ENCODE measurements at regions of chr9 and their contacts with region 1.

Region 1: GRCh38 chr9:133144137-133144903 is 19.4 kb downstream of the GBGT1 start:
- DNase-seq: peak; percentile 96
- H3K4me3 Mint-ChIP-seq: peak overlapping the region; percentile 57
- H3K27ac Mint-ChIP-seq: peak overlapping the region; percentile 65
- H3K4me1 Mint-ChIP-seq: peaks cover 59% of the 10 kb centered on the region
- H3K27me3 Mint-ChIP-seq: no peaks in the 10 kb centered on the region

Region 2: GRCh38 chr9:132901856-132902831 is 242.2 kb before region 1 on chr9:
- CTCF ChIA-PET with region 1: no interaction called
- intact Hi-C with region 1: no loop called
- DNase-seq: peak; percentile 92
- H3K4me3 Mint-ChIP-seq: no peak overlapping the region
- H3K27ac Mint-ChIP-seq: no peak overlapping the region
- H3K4me1 Mint-ChIP-seq: peaks cover 2% of the 10 kb centered on the region
- H3K27me3 Mint-ChIP-seq: no peaks in the 10 kb centered on the region

Region 3: DNA sequence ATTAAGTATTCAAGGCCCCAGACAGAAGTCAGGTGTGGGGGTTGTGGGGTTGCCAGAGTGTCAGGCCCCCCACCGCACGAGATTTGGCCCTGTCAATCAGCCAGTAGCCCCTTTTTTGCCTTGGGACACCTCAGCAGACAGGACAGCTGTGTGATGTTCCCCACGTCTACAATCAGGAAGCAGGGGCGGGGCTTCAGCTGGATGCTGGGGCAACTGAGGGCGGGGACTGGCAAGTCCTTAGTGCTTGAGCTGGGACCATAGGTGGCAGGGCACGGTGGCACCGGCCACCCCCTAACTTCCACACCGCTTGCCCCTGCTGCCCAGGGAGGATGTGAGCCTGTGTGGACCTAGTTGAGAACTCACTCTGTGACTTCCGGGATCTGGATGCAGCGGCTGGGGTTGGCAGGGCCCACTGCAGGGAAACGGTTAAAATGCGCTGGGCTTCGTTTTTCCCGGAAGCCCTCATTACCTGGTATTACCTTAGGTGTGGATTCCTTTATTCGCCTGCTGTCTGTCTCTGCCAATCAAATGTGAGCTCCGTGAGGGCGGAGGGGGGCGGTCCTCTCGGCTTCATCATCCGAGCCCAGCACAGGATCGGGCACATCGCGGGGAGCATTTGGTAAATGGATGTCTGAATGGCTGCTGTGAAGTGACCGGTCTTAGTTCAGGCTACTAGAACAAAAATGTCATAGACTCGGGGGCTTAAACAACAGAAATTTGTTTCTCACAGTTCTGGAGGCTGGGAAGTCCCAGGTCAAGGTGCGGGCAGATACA is 121.0 kb before region 1 on chr9:
- CTCF ChIA-PET with region 1: interaction called, 10 read pairs
- intact Hi-C with region 1: loop called (anchors 1 kb)
- DNase-seq: peak; percentile 70
- H3K4me3 Mint-ChIP-seq: no peak overlapping the region
- H3K27ac Mint-ChIP-seq: no peak overlapping the region
- H3K4me1 Mint-ChIP-seq: peaks cover 15% of the 10 kb centered on the region
- H3K27me3 Mint-ChIP-seq: no peaks in the 10 kb centered on the region

Region 4: DNA sequence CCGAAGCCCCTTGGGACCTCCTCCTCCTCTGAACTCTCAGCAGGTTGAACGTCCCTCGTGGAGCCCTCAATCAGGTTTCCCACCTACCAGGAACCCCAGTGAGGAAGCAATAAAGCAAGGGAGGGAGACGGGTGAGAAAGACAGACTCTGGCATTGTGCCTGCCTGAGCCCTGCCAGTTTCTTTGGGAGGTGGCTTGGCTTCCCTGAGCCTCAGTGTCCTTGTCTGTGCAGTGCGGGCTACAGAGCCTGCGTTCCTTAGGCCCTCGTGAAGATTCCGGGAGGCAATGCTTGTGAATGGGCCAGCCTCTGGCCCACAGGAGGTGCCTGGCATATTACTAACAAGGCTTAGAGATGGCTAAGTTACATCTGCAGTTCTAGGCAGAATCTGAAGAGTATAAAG is 101.6 kb before region 1 on chr9:
- CTCF ChIA-PET with region 1: interaction called, 18 read pairs
- intact Hi-C with region 1: no loop called
- DNase-seq: no peak
- H3K4me3 Mint-ChIP-seq: no peak overlapping the region
- H3K27ac Mint-ChIP-seq: no peak overlapping the region
- H3K4me1 Mint-ChIP-seq: peaks cover 4% of the 10 kb centered on the region
- H3K27me3 Mint-ChIP-seq: no peaks in the 10 kb centered on the region

Region 5: GRCh38 chr9:133108794-133109641 is 35.3 kb before region 1 on chr9:
- CTCF ChIA-PET with region 1: interaction called, 85 read pairs
- intact Hi-C with region 1: no loop called
- DNase-seq: no peak
- H3K4me3 Mint-ChIP-seq: no peak overlapping the region
- H3K27ac Mint-ChIP-seq: no peak overlapping the region
- H3K4me1 Mint-ChIP-seq: peaks cover 21% of the 10 kb centered on the region
- H3K27me3 Mint-ChIP-seq: no peaks in the 10 kb centered on the region

Region 6: DNA sequence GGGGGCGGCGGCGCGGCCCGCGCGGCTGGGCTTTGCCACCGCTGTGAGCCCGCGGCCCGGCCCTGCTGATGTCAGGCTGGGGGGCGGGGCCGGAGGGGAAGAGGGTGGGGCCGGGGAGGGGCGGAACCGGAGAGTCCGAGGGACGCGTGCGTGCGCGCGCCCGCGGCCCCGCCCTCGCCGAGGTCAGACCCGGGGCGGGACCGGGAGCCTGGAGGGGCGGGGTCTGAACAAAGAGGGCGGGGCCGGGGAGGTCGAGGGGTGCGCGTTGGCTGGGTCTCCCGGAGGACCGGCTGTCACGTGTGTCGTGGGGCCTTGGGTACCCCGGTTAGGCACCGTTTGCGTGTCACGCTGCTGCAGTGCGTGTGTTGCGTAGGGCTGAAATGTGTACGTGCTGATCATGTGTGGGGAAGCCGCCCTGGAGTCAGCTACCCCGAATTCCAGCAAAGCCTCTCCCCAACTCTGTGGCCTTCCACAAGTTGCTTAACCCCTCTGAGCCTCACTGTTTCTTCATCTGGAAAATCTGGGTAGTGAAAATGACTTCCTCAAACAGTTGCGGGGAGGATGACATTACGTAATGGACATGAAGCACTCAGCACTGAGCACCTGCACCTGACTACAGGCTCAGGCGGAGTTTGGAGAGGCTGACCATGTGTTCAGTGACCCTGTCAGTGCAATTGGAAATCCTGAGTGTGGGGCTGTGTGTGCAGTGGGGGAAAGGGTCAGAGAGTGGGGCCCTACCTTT is 23.0 kb before region 1 on chr9 and contains the start of gene RALGDS:
- CTCF ChIA-PET with region 1: interaction called, 85 read pairs
- intact Hi-C with region 1: loop called (anchors 1 kb)
- DNase-seq: peak; percentile 91
- H3K4me3 Mint-ChIP-seq: peak within 1 kb of the TSS; percentile 78
- H3K27ac Mint-ChIP-seq: peak within 1 kb of the TSS; percentile 89
- H3K4me1 Mint-ChIP-seq: peaks cover 43% of the 10 kb centered on the region
- H3K27me3 Mint-ChIP-seq: no peaks in the 10 kb centered on the region
- total RNA-seq, gene RALGDS: 29.5 to 32.5 TPM

Measured in activated naive CD4-positive, alpha-beta T cell treated with anti-CD3 and anti-CD28 coated beads for 36 hours (primary cell).